Thyroid gland (tissue), 4 donors: ENCODE measurements at regions of chr11 and their contacts with region 1.

Region 1: DNA sequence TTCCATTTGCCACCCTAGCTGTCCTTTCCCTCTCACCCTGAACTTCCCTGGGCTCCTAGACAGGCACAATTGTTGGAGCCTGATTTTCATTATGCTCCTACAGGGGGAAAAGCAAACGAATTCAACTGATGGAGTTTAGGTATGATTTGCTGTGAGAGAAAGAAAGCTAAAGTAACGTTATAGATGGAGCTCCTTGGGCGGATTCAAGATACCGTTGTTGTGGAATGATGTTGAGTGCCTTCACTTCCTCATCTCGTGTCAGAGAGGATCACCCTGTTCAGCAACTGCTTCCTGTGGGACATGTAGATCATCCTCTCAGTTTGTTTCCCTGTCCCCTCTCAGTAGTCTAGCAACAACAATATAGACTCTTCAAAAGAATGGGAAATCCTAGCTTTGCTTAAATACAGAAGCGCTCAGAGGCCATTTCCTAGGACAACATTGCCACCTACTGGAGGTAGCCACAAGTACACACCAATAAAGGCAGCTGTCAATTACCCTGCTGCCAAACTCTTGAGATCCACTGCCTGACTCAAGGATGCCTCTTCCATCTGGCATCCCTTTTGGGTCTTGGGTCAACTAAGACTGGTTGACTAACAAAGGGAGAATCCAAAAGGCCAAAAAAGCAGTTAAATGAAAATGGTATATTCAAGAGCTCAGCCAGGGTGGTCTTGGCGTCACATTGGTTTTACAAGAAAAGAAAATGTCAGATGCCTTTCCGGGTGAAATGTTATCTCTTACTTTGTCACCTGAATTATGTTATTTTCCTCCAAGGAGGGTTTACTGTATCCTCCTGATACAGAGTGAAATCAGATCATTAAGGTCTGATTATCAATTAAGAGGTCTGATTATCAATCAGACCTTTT is 13.5 kb upstream of the DTX4 start:
- DNase-seq: peak; percentile 47 to 49
- H3K4me3 ChIP-seq: no peak overlapping the region
- H3K27ac ChIP-seq: no peak overlapping the region
- H3K4me1 ChIP-seq: no peaks in the 10 kb centered on the region
- H3K27me3 ChIP-seq: no peaks in the 10 kb centered on the region
- CTCF ChIP-seq: peak; percentile 55 to 81 (median 75)
- POLR2A ChIP-seq: no peak

Region 2: GRCh38 chr11:59097113-59097708 is 61.2 kb before region 1 on chr11:
- intact Hi-C with region 1: loop called (anchors 10 kb)
- DNase-seq: peak; percentile 55 to 59
- H3K4me3 ChIP-seq: no peak overlapping the region
- H3K27ac ChIP-seq: no peak overlapping the region
- H3K4me1 ChIP-seq: peaks cover 0 to 6% of the 10 kb centered on the region in 2 donors
- H3K27me3 ChIP-seq: no peaks in the 10 kb centered on the region
- CTCF ChIP-seq: peak; percentile 13 to 65 (median 40)
- POLR2A ChIP-seq: no peak

Region 3: DNA sequence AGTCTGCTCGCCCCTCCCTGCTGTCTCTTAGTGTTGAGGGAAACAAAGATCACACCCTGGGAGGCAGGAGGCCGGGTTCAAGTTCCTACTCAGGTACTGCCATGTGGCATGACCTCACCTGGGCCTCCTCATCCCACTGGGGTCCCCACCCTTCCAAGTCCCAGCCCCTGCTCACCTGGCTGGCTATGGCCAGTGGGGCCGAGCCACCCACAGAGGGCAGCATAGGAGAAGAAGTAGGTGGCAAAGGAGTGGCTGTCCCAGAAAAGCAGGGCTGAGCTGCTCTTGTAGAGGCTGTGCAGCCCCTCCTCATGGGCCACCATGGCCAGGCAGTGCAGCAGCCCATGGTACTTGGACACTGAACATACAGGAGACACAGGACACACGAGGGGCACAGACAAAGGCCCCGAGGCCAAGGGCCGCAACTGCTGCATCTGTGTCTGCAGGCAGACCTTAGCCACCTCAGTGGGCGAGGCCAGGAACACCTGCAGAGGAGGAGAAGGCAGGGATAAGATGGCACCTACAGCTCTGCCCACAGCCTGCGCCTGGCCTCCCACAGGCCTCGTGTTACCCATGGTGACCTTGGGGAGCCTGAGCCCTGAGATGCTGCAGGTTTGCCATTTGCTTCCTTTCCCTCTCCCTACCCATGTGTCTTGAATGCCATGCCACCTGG is 104.9 kb after region 1 on chr11:
- intact Hi-C with region 1: no loop called
- DNase-seq: no peak
- H3K4me3 ChIP-seq: no peak overlapping the region
- H3K27ac ChIP-seq: no peak overlapping the region
- H3K4me1 ChIP-seq: peaks cover 9 to 27% of the 10 kb centered on the region in 2 donors
- H3K27me3 ChIP-seq: no peaks in the 10 kb centered on the region
- CTCF ChIP-seq: no peak
- POLR2A ChIP-seq: no peak